HEK293 (cell line): ENCODE measurements at regions of chr1 and their contacts with region 1.

Region 1: DNA sequence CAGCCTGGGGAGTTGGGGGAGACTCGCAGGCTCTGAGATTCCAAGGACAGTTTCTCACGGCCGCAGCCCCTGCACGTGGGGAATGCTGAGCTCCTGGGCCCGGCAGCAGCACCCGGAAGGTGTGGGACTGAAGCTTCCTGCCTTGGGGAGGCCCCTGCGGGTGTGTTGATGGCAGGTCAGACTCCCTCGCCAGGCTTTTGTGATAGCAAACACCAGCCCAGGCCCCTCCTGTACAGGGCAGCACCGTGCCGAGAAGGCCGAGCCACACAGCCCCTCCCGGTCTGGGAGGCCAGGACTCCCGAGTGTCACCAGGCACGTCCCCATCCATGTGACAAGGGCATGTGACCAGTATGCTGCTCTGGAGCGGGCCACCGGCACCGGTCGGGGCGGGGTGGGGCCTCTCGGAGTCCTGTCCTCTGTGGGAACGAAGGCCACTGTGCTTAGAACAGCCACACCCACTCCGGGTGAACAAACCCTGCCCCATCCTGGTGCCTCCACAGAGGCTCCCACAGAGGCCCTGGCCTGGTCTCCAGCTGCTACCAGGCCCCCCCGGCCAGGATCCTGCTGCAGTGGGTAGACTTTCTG is 31.1 kb upstream of the ARHGEF16 start:
- H3K4me3 ChIP-seq: no peak overlapping the region
- H3K27ac ChIP-seq: no peak overlapping the region
- H3K4me1 ChIP-seq: peaks cover 20% of the 10 kb centered on the region
- CTCF ChIP-seq: no peak

Region 2: DNA sequence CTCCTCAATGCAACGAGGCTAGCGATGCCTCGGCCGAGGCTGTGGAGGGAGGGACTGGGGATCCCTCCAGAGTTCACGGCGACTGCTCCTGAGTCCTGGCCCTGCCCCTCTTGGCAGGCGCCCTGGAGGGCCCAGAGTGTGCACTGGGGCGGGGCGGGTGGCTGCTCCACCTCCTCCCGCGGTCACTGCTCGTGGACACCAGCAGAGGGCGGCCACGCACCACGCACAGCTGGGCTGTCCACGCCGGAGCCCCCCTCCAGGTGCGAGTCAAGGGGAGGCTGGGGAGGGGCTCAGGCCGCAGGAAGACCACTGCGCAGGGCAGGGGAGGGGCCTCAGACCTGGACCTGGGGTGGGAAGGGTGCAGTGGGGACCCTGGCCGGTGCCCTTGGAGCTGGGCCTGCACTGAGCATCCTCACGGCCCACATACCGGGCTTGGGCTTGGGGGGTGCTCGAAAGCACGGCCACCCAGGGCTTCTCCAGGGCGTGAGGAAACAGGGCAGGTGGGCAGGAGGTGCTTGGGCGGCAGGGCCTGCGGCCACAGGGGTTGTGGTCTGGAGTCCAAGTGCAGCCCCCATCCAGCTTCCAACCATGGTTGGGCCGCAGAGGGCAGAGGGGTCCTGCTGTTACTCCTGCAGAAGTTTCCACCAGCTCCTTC is 601.2 kb before region 1 on chr1:
- CTCF ChIA-PET with region 1: interaction called, 23 read pairs
- POLR2A ChIA-PET with region 1: no interaction called
- H3K4me3 ChIP-seq: no peak overlapping the region
- H3K27ac ChIP-seq: no peak overlapping the region
- H3K4me1 ChIP-seq: no peaks in the 10 kb centered on the region
- CTCF ChIP-seq: peak; percentile 89

Region 3: GRCh38 chr1:3393024-3393986 is 30.0 kb before region 1 on chr1:
- CTCF ChIA-PET with region 1: no interaction called
- POLR2A ChIA-PET with region 1: no interaction called
- H3K4me3 ChIP-seq: no peak overlapping the region
- H3K27ac ChIP-seq: peak overlapping the region; percentile 99
- H3K4me1 ChIP-seq: peaks cover 22% of the 10 kb centered on the region
- CTCF ChIP-seq: peak; percentile 34; the same call in 1 of the 2 replicates